ENCODE measurements at regions of chr11 and their contacts with region 1.

Region 1: DNA sequence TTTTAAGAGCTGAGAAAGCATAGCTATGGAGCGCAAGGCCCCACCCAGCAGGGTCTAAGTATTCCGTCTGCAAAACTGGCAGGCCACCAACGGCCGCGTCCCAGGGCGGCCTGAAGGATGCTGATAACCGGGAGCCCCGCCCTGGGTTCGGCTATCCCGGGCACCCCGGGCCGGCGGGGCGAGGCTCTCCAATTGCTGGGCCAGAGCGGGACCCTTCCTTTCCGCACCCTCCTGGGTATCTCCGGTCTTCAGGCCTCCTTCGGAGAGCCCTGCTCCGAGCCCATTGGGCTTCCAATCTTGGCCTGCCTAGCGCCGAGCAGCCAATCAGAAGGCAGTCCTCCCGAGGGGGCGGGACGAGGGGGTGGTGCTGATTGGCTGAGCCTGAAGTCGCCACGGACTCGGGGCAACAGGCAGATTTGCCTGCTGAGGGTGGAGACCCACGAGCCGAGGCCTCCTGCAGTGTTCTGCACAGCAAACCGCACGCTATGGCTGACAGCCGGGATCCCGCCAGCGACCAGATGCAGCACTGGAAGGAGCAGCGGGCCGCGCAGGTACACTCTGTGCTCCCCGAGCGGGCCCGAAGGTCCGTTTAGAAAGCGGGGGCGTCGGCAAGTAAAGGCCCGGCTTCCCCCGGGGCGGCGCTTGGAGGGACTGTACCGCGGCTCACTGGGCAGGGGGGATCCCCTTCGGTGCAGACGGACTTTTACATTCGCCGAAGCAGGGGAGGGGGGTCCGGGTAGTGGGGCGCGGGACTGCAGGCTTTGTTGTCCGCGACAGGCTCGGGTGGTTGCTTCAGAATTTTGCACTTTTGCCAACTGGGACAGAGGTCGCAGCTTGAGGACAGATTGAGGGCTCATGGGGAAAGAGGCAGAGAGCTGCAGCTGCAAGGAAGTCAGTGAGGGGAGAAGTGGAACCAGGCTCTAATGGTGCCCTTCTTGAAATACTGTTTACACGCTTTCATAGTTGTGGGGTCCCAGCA is at the start of gene CAT:
- DNase-seq: peak; percentile 98
- CTCF ChIP-seq: no peak

Region 2: DNA sequence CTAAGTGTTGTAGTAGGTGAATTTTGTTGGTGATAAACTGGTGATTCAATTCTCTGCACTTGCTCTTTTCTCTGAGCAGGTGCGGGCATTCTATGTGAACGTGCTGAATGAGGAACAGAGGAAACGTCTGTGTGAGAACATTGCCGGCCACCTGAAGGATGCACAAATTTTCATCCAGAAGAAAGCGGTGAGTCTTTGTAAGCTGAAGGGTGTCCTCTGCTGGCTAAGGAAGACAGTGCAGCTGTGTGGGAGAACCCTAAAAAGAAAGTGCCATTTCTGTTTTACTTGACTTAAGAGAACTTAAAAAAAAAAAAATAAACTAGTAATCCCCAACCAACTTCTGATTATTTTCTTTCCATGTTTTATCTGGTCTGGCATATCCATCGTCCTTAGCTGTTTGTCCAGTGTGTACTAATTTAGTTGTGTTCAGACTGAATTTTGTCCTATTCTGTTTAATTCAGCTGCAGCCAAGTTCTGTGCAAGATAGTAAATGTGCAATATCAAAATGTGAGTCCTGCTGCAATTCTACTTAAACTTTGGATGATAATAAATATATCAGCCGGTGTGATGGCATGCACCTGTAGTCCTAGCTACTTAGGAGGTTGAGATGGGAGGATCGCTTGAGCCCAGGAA is 29.5 kb after region 1 on chr11:
- CTCF ChIA-PET with region 1: interaction called, 13 read pairs
- POLR2A ChIA-PET with region 1: no interaction called
- DNase-seq: peak; percentile 39
- CTCF ChIP-seq: peak; percentile 65

Measured in GM10248 (cell line).